Activated CD8-positive, alpha-beta T cell treated with anti-CD3 and anti-CD28 coated beads for 36 hours (primary cell): ENCODE measurements at regions of chr1 and their contacts with region 1.

Region 1: DNA sequence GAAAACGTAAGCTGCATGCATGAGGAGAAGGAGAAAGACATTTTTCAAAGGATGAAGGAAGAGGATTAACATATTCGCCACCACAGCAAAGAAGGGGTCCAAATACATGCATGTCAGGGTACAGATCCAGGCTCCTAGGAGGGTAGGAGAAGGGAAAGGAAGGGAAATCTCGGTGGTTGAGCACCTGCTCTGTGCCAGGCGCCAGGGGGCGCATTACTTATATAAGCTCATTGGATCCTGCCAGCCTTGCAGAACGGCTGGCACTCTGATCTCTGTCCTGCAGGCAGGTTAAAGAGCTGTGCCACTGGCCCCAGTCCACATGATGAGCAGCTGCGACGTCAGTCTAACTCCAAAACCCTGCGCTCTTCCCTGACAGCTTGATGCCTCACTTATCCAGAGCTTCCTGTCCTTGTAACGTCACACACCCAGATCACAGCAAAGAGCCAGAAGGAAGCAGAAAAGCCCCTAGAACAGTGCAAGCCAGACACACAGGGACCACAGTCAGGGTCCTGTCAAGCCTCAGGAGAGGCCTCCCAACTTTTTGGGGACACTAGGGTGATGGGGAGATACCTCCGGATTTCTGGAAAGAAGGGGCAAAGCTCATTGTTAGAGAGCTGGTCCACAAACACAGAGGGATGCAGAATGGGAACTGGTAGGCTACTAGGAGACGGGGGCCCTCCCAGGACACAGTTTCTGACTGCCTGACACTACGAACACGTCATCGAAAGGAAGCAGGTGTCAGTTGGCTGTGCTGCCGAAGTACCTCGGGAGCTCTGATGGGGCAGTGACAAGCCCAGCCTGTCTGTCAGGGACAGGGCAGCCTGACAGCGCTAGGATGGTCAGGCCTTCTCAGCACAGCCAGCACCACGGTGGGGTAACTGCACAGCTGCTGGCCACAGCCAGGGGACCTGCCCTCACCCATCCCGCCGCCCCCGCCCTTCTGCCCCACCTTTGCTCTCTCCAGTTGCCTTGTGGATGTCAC is 99.1 kb downstream of the BEND5 start:
- DNase-seq: peak; percentile 67
- ATAC-seq: peak; percentile 77
- H3K4me3 Mint-ChIP-seq: no peak overlapping the region
- H3K27ac Mint-ChIP-seq: no peak overlapping the region
- H3K4me1 Mint-ChIP-seq: no peaks in the 10 kb centered on the region
- H3K27me3 Mint-ChIP-seq: peaks cover 24% of the 10 kb centered on the region
- CTCF ChIP-seq: peak; percentile 74

Region 2: GRCh38 chr1:48688102-48688760 is 10.6 kb after region 1 on chr1:
- CTCF ChIA-PET with region 1: interaction called, 11 read pairs
- POLR2A ChIA-PET with region 1: interaction called, 3 read pairs
- intact Hi-C with region 1: no loop called
- DNase-seq: no peak
- ATAC-seq: peak; percentile 64
- H3K4me3 Mint-ChIP-seq: no peak overlapping the region
- H3K27ac Mint-ChIP-seq: no peak overlapping the region
- H3K4me1 Mint-ChIP-seq: no peaks in the 10 kb centered on the region
- H3K27me3 Mint-ChIP-seq: no peaks in the 10 kb centered on the region
- CTCF ChIP-seq: peak; percentile 36

Region 3: GRCh38 chr1:48697066-48697707 is 19.6 kb after region 1 on chr1:
- CTCF ChIA-PET with region 1: interaction called, 13 read pairs
- POLR2A ChIA-PET with region 1: no interaction called
- intact Hi-C with region 1: no loop called
- DNase-seq: peak; percentile 78
- ATAC-seq: peak; percentile 49
- H3K4me3 Mint-ChIP-seq: no peak overlapping the region
- H3K27ac Mint-ChIP-seq: no peak overlapping the region
- H3K4me1 Mint-ChIP-seq: no peaks in the 10 kb centered on the region
- H3K27me3 Mint-ChIP-seq: peaks cover 17% of the 10 kb centered on the region
- CTCF ChIP-seq: peak; percentile 79

Region 4: DNA sequence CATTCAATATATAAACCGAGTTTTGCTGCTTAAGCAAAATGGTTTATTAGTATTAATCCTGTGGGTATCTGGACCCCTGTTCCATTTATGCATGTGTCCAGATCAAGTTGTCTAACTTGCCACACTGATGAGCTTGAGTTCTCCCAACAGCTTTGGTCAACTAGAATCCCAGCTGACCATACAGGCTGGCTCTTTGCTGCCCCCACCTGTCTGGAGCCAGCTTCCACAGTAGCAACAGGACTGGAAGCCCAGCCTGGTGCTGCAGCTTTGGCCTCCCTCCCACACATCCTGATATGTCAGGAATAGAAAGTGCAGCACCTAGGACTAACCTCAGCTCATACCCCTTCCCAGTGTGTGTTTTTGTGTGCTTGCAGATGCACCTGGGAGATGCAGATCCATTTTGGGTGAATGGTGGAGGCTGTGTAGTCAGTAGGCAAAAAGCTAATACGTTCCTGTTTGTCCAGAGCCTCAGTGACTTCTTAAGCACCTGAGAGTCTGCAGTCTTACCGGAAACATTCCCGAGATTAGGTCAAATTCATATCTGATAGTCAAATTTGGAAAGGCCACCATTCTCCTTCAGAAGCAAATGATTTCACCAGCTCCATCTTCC is 140.0 kb after region 1 on chr1:
- CTCF ChIA-PET with region 1: interaction called, 48 read pairs
- POLR2A ChIA-PET with region 1: no interaction called
- intact Hi-C with region 1: loop called (anchors 5 kb)
- DNase-seq: peak; percentile 67
- ATAC-seq: peak; percentile 66
- H3K4me3 Mint-ChIP-seq: no peak overlapping the region
- H3K27ac Mint-ChIP-seq: no peak overlapping the region
- H3K4me1 Mint-ChIP-seq: no peaks in the 10 kb centered on the region
- H3K27me3 Mint-ChIP-seq: peaks cover 14% of the 10 kb centered on the region
- CTCF ChIP-seq: peak; percentile 54

Region 5: GRCh38 chr1:48823168-48823567 is 145.6 kb after region 1 on chr1:
- CTCF ChIA-PET with region 1: interaction called, 48 read pairs
- POLR2A ChIA-PET with region 1: no interaction called
- intact Hi-C with region 1: loop called (anchors 5 kb)
- DNase-seq: no peak
- ATAC-seq: no peak
- H3K4me3 Mint-ChIP-seq: no peak overlapping the region
- H3K27ac Mint-ChIP-seq: no peak overlapping the region
- H3K4me1 Mint-ChIP-seq: no peaks in the 10 kb centered on the region
- H3K27me3 Mint-ChIP-seq: peaks cover 14% of the 10 kb centered on the region
- CTCF ChIP-seq: no peak

Region 6: DNA sequence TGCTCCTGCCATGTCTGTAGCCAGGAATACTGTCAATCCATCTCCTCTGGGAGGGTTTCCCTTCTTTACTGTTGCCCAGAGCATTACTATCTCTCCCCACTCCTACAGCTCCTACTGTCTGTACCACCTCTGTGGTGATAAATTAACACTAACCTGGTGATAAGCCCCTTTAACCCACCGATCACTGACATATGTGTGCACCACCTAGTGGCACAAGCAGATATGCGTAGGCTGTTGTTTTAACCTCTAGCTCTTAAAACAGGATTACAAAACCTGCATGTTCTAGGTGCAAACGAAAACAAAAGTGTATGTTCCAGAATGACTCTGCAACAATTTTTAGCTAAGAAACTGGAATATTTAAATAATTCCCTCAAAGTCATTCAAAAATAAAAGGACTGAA is 193.0 kb after region 1 on chr1:
- CTCF ChIA-PET with region 1: interaction called, 17 read pairs
- POLR2A ChIA-PET with region 1: no interaction called
- intact Hi-C with region 1: no loop called
- DNase-seq: peak; percentile 47
- ATAC-seq: peak; percentile 56
- H3K4me3 Mint-ChIP-seq: no peak overlapping the region
- H3K27ac Mint-ChIP-seq: no peak overlapping the region
- H3K4me1 Mint-ChIP-seq: no peaks in the 10 kb centered on the region
- H3K27me3 Mint-ChIP-seq: peaks cover 15% of the 10 kb centered on the region
- CTCF ChIP-seq: peak; percentile 56